Activated T-helper 2 cell treated with anti-CD3 and anti-CD28 coated beads, Interferon-gamma antibody, Interleukin-2, Interleukin-4, amounts not matched to agents 10 μg/mL and 5 μg/mL and 100 μg/mL, durations not matched to agents 14 hours and 24 hours and 36 hours (primary cell): ENCODE measurements at regions of chr3 and their contacts with region 1.

Region 1: GRCh38 chr3:152508705-152509104 is 240.0 kb downstream of the MBNL1 start:
- DNase-seq: no peak
- H3K4me3 Mint-ChIP-seq: no peak overlapping the region
- H3K27ac Mint-ChIP-seq: no peak overlapping the region
- H3K4me1 Mint-ChIP-seq: peaks cover 15% of the 10 kb centered on the region
- H3K27me3 Mint-ChIP-seq: peaks cover 11% of the 10 kb centered on the region

Region 2: GRCh38 chr3:152524198-152525140 is 15.8 kb after region 1 on chr3:
- intact Hi-C with region 1: loop called (anchors 2 kb)
- DNase-seq: no peak
- H3K4me3 Mint-ChIP-seq: no peak overlapping the region
- H3K27ac Mint-ChIP-seq: no peak overlapping the region
- H3K4me1 Mint-ChIP-seq: peaks cover 1% of the 10 kb centered on the region
- H3K27me3 Mint-ChIP-seq: peaks cover 3% of the 10 kb centered on the region

Region 3: DNA sequence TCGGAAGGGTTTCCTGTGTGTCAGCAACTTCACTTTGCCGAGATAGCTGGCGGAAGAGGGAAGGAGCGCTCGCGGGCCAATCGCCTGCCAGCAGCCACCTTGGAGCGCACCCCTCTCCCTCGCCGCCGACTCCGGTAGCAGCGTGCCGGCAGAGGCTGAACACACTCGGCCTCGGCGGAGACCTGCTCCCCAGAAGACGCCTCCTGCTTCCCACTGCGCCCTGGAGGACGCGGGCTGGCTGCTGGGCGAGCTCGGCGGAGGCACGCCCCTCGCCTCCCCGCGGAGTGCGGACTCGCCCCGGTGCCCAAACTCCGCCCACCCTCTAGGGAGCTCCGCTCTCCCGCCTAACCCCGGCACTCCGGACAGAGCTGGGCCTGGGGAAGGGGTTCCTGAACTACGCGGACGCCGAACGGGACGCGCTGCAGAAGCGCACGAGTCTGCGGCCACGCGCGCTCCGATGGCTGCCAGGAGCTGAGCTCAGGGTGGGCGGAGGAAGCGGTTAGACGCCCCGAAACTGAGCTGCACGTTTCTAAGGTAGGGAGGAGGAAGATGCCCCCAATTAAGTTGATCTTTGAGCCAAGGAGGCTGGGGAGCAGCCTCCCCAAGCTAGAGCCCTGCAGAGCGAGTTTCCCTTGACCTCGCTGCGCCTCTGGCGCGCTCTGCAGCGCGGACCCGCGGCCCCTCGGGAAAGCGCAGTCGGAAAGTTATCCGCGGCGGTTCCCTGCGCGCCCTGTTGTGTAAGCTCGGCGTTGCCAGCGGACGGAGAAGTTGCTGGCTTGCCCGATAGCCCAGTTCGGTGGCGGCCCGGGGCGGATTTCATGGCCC is 326.3 kb after region 1 on chr3 and contains the start of gene P2RY1:
- intact Hi-C with region 1: loop called (anchors 10 kb)
- DNase-seq: peak; percentile 33
- H3K4me3 Mint-ChIP-seq: peak within 1 kb of the TSS; percentile 88
- H3K27ac Mint-ChIP-seq: peak within 1 kb of the TSS; percentile 81
- H3K4me1 Mint-ChIP-seq: peaks cover 16% of the 10 kb centered on the region
- H3K27me3 Mint-ChIP-seq: peaks cover 56% of the 10 kb centered on the region
- total RNA-seq, gene P2RY1: 1.7 and 2.1 TPM in 2 replicates